ENCODE measurements at regions of chr5 and their contacts with region 1.

Region 1: GRCh38 chr5:141839015-141839513 is 39.1 kb downstream of the PCDH1 start:
- DNase-seq: no peak

Region 2: DNA sequence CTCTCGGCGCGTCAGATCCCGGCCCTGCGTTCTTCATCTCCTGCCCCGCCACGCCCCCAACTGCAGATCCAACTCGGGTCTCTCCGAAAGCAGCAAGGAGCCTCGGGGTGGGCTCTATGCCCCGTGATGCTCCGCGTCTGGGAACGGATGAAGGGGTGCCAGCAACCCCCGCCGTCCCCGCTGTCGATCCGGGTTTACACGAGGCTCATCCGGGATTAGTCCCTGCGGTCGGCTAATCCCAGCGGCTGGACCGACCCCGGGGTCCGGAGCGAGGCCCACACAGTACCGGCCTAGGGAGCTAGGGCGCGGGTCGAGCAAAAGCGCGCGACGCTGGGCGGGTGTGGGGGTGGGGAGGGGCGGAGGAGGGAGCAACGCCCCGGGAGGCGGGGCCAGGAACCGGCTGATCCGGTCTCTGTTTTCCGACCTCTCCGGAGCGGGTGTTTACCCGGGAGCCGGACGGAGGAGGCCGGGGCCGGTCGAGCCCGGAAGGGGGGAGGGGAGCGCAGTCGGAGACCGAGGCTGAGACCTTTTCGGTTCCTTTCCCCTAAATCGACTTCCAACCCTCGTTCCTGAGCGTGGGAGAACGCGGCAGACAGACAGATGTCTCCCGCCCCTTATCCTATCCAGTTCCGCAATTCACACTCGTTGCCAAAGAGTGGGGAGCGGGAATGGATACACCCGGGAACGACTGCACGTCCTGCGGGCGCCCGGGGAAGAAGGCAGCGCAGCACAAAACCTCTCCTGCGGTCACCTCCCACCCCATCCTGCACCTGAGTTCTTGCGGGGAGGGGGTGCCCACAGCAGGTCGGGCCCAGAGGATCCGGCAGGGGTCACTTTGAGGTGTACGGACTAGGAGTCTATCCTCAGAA is 10.5 kb after region 1 on chr5:
- CTCF ChIA-PET with region 1: no interaction called
- POLR2A ChIA-PET with region 1: interaction called, 11 read pairs
- DNase-seq: peak; percentile 80

Measured in HEK293T (cell line).